HCT116 (cell line): ENCODE measurements at regions of chr2 and their contacts with region 1.

Region 1: GRCh38 chr2:226799181-226799975 is at the start of gene IRS1:
- DNase-seq: peak; percentile 32
- ATAC-seq: peak; percentile 71
- H3K4me3 ChIP-seq: peak within 1 kb of the TSS; percentile 55 to 71
- H3K27ac ChIP-seq: peak within 1 kb of the TSS; percentile 88
- H3K4me1 ChIP-seq: peaks cover 31 to 89% of the 10 kb centered on the region in 2 experiments; a peak in 3 of 4 replicates
- H3K27me3 ChIP-seq: no peaks in the 10 kb centered on the region
- CTCF ChIP-seq: peak in 1 of 3 experiments; percentile 26; a peak in 3 of 6 replicates
- POLR2A ChIP-seq: no peak
- RAD21 ChIP-seq: no peak
- total RNA-seq, gene IRS1: 88.8 TPM

Region 2: DNA sequence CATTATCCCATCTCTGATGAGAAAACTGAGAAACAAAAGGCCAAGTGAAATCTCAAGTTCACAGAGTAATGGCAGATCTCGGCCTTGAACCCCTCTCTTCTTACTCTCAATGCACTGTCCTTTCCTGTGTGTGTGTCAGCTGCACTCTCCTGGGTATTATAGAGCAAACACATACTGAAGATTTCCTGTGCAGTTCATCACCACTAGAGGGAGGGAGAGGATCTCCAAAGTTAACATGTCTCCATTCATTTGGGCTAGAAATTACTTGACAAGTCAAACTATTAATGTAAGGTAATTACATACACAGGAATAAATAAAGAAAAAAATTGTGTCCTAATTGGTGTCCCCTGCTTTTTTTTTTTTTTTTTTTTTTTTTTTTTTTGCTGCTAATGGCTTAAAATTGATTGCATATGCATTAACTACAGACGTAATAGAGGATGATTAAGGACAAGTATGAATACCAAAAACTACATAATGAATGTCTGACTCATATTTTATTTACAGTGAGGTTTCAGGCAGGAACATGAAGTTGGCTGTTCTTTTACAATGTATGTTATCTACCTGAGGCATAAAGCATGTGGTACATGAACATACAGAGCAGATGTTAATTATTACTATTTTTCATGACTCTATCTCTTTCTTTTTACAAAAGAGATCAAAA is 1130.6 kb before region 1 on chr2:
- CTCF ChIA-PET with region 1: interaction called, 8 read pairs
- POLR2A ChIA-PET with region 1: no interaction called
- RAD21 ChIA-PET with region 1: interaction called in 1 of 2 experiments, 4 read pairs
- intact Hi-C with region 1: loop called (anchors 1 kb)
- DNase-seq: peak; percentile 72
- ATAC-seq: peak; percentile 79
- H3K4me3 ChIP-seq: no peak overlapping the region
- H3K27ac ChIP-seq: peak overlapping the region; percentile 67; the same call in 1 of the 2 replicates
- H3K4me1 ChIP-seq: peaks cover 21 to 32% of the 10 kb centered on the region in 2 experiments
- H3K27me3 ChIP-seq: no peaks in the 10 kb centered on the region
- CTCF ChIP-seq: peak; percentile 74 to 91 (median 80)
- POLR2A ChIP-seq: no peak
- RAD21 ChIP-seq: peak; percentile 86

Region 3: DNA sequence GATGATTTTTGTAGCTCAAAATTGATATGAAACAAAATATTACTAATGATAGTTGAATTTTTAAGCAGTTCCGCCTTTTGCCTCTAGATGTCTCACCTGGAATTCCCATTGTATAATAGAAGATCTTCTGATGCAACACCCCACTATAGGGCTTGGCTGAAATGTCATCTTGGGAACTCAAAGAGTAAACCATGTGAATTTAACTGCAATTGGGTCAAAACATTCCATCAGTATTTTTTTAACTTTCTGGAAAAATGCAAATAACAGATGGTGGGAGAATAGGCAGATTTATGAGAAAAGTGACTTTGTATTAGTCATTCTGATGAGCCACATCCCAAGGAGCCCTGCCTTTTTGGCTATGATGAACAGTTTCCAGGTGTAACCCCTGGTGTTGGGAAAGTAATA is 909.9 kb before region 1 on chr2:
- CTCF ChIA-PET with region 1: interaction called, 4 read pairs
- POLR2A ChIA-PET with region 1: no interaction called
- RAD21 ChIA-PET with region 1: no interaction called
- intact Hi-C with region 1: loop called (anchors 5 kb)
- DNase-seq: peak; percentile 60
- ATAC-seq: peak; percentile 76
- H3K4me3 ChIP-seq: no peak overlapping the region
- H3K27ac ChIP-seq: peak overlapping the region; percentile 33; the same call in 1 of the 2 replicates
- H3K4me1 ChIP-seq: peaks cover 8 to 20% of the 10 kb centered on the region in 2 experiments; a peak in 3 of 4 replicates
- H3K27me3 ChIP-seq: no peaks in the 10 kb centered on the region
- CTCF ChIP-seq: peak; percentile 47 to 73 (median 65); a peak in 5 of 6 replicates
- POLR2A ChIP-seq: no peak
- RAD21 ChIP-seq: peak; percentile 90

Region 4: GRCh38 chr2:226423498-226423960 is 375.8 kb before region 1 on chr2:
- CTCF ChIA-PET with region 1: no interaction called
- POLR2A ChIA-PET with region 1: no interaction called
- RAD21 ChIA-PET with region 1: no interaction called
- intact Hi-C with region 1: loop called (anchors 10 kb)
- DNase-seq: no peak
- ATAC-seq: peak; percentile 57
- H3K4me3 ChIP-seq: peak overlapping the region in 1 of 2 experiments; percentile 35; a peak in 2 of 4 replicates
- H3K27ac ChIP-seq: peak overlapping the region; percentile 86
- H3K4me1 ChIP-seq: peaks cover 61% of the 10 kb centered on the region in 2 experiments
- H3K27me3 ChIP-seq: no peaks in the 10 kb centered on the region
- CTCF ChIP-seq: no peak
- POLR2A ChIP-seq: no peak
- RAD21 ChIP-seq: no peak; the same call in 1 of the 2 replicates

Region 5: GRCh38 chr2:226611944-226612318 is 187.4 kb before region 1 on chr2:
- CTCF ChIA-PET with region 1: no interaction called
- POLR2A ChIA-PET with region 1: interaction called, 8 read pairs
- RAD21 ChIA-PET with region 1: no interaction called
- intact Hi-C with region 1: loop called (anchors 2 kb)
- DNase-seq: peak; percentile 94
- ATAC-seq: peak; percentile 84
- H3K4me3 ChIP-seq: no peak overlapping the region
- H3K27ac ChIP-seq: peak overlapping the region; percentile 96
- H3K4me1 ChIP-seq: peaks cover 43 to 57% of the 10 kb centered on the region in 2 experiments
- H3K27me3 ChIP-seq: no peaks in the 10 kb centered on the region
- CTCF ChIP-seq: no peak
- POLR2A ChIP-seq: peak; percentile 6
- RAD21 ChIP-seq: peak; percentile 57

Region 6: GRCh38 chr2:226813148-226813701 is 13.8 kb after region 1 on chr2:
- CTCF ChIA-PET with region 1: no interaction called
- POLR2A ChIA-PET with region 1: no interaction called
- RAD21 ChIA-PET with region 1: no interaction called
- intact Hi-C with region 1: no loop called
- DNase-seq: no peak
- ATAC-seq: peak; percentile 74
- H3K4me3 ChIP-seq: no peak overlapping the region
- H3K27ac ChIP-seq: no peak overlapping the region
- H3K4me1 ChIP-seq: no peaks in the 10 kb centered on the region
- H3K27me3 ChIP-seq: no peaks in the 10 kb centered on the region
- CTCF ChIP-seq: peak; percentile 49 to 64 (median 63); a peak in 5 of 6 replicates
- POLR2A ChIP-seq: no peak
- RAD21 ChIP-seq: peak; percentile 79